Activated CD4-positive, alpha-beta T cell treated with anti-CD3 and anti-CD28 coated beads, Interleukin-2, amount 10 ng/mL, durations not matched to agents 24 days and 14 days (primary cell): ENCODE measurements at regions of chr19 and their contacts with region 1.

Region 1: DNA sequence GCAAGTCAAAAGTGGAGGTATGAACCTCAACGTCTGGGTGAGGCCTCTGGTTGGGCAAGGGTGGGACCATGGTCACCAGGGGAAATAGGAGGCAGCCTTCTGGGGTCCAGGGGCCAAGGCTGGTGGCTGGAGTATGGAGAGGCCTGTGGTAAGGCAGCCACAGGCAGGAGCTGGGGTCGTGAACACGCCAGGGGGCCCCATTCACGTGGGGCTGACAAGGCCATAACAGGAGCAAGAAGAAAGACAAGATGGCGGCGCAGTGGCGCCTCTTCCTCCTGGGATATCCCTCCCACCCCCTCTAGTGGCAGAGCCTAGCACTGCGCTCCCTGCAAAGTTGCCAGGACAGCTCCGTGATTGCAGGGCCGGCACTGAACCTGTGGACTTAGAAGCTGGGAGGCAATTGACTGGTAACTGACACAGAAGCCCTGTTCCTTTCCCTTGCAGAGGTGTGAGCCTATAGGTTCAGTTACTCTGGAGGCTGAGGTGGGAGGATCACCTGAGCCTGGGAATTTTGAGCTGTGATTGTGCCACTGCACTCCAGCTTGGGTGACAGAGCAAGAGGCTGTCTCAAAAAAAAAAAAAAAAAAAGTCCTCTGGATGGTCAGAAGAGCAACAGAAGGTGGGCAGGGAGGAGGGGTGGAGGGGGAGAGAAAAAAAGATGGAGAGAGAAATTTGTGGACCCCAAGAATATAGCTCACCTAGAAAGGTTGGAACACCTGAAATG is 19.7 kb upstream of the EDDM13 start:
- DNase-seq: peak; percentile 91
- H3K4me3 Mint-ChIP-seq: no peak overlapping the region
- H3K27ac Mint-ChIP-seq: no peak overlapping the region
- H3K4me1 Mint-ChIP-seq: no peaks in the 10 kb centered on the region
- H3K27me3 Mint-ChIP-seq: no peaks in the 10 kb centered on the region

Region 2: GRCh38 chr19:56066152-56067023 is 186.5 kb before region 1 on chr19:
- intact Hi-C with region 1: loop called (anchors 5 kb)
- DNase-seq: peak; percentile 90
- H3K4me3 Mint-ChIP-seq: peak overlapping the region; percentile 75
- H3K27ac Mint-ChIP-seq: no peak overlapping the region
- H3K4me1 Mint-ChIP-seq: peaks cover 10% of the 10 kb centered on the region
- H3K27me3 Mint-ChIP-seq: peaks cover 6% of the 10 kb centered on the region

Region 3: DNA sequence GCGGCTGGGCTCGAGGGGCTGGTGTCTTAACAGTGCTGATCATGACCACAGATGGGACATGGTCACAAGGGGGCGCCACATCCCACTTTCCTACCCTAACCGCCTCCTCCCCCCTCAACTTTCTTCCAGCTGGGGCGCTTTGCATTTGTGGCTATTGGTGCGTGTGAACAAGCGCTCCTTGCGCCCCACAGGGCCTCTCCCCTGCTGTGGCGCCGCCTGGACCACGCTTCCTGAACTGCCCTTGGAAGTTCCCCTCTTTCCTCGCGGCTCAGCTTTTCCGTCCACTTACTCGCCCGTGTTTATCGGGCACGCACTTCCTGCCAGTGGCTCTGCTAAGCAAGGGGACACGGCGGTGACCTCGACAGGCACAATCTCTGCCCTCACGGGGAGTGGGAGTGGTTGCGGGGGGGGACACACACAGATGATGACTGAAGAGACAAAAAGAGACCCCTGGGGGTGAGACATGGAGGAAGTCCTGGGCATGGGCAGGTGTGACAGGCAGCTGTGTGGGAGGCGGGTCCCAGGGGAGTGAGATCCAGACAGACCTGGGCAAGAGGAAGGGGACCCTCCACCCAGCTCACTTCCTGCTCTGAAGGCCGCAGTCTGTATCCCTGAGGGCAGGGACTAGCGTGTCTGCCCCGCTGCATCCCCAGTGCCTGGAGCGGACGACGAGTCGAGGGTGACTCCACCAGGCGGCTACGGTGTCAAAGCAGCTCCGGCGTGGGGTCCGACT is 172.0 kb before region 1 on chr19:
- intact Hi-C with region 1: loop called (anchors 5 kb)
- DNase-seq: peak; percentile 88
- H3K4me3 Mint-ChIP-seq: peak overlapping the region; percentile 79
- H3K27ac Mint-ChIP-seq: peak overlapping the region; percentile 58
- H3K4me1 Mint-ChIP-seq: peaks cover 10% of the 10 kb centered on the region
- H3K27me3 Mint-ChIP-seq: peaks cover 4% of the 10 kb centered on the region

Region 4: DNA sequence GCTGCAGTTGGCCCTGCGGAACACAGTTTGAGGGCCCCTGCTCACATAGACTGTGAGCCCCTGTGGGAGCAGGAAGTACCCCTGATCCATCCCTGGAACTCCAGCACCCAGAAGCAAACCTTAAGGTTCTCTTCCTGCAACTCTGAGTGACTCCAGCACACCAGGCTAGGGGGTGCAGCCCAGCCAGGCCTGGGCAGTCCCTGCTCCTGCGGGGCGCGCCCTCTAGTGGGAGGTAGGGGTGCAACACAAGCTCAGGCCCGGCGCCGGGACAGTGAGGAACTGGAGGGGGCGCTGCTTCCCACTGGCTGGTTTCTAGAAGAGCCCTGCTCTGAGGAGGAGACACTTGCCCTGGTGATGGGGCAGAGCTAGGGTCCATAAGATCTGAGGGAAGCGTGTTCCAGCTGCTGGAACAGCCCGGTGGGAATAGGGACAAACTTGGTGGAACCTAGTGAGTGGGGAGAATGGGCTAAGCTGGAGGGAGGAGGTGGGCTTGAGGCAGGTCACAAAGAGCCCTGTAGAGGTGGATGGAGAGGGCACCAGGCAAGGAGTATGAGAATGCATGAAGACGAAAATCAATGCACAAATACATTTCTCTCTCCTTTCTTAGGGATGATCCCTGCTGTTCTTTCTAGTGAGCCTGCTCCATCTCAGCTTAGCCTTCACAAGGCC is 56.8 kb after region 1 on chr19:
- intact Hi-C with region 1: no loop called
- DNase-seq: peak; percentile 88
- H3K4me3 Mint-ChIP-seq: no peak overlapping the region
- H3K27ac Mint-ChIP-seq: peak overlapping the region; percentile 21
- H3K4me1 Mint-ChIP-seq: peaks cover 24% of the 10 kb centered on the region
- H3K27me3 Mint-ChIP-seq: no peaks in the 10 kb centered on the region

Region 5: GRCh38 chr19:56333505-56333904 is 80.6 kb after region 1 on chr19:
- intact Hi-C with region 1: loop called (anchors 1 kb)
- DNase-seq: peak; percentile 86
- H3K4me3 Mint-ChIP-seq: no peak overlapping the region
- H3K27ac Mint-ChIP-seq: no peak overlapping the region
- H3K4me1 Mint-ChIP-seq: no peaks in the 10 kb centered on the region
- H3K27me3 Mint-ChIP-seq: no peaks in the 10 kb centered on the region

Region 6: DNA sequence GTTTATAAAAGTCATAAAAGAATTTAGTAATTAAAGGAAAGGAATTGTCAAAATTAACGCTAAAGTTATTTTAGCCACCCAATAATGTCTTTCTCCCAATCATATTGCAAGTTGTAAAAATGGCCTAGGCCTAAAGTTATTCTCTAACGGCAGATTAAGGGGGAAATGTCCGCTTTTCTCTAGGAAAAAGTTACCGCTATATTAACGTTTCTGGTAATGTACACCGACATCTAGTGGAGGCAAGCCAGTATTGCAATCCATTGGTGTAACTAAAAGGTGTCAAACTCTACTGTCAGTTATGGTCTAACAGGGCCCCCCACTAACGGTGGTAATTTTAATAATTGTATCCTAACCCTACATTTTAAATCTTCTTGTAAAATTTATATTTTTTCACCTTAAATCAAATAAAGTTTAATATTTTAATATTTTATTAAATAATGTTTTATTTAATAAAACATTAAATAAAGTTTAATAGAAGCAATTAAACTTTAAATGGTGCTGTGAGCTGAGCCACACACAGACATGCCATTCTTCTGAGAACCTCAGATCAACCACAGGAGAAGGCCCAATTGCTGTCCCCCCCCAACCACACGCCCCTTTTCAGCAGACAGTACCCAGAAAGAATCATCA is 97.7 kb after region 1 on chr19:
- intact Hi-C with region 1: loop called (anchors 1 kb)
- DNase-seq: peak; percentile 84
- H3K4me3 Mint-ChIP-seq: no peak overlapping the region
- H3K27ac Mint-ChIP-seq: no peak overlapping the region
- H3K4me1 Mint-ChIP-seq: no peaks in the 10 kb centered on the region
- H3K27me3 Mint-ChIP-seq: no peaks in the 10 kb centered on the region

Region 7: GRCh38 chr19:56377104-56377924 is 124.5 kb after region 1 on chr19:
- intact Hi-C with region 1: no loop called
- DNase-seq: no peak
- H3K4me3 Mint-ChIP-seq: no peak overlapping the region
- H3K27ac Mint-ChIP-seq: no peak overlapping the region
- H3K4me1 Mint-ChIP-seq: no peaks in the 10 kb centered on the region
- H3K27me3 Mint-ChIP-seq: no peaks in the 10 kb centered on the region

Region 8: GRCh38 chr19:56491399-56491798 is 238.5 kb after region 1 on chr19:
- intact Hi-C with region 1: no loop called
- DNase-seq: no peak
- H3K4me3 Mint-ChIP-seq: no peak overlapping the region
- H3K27ac Mint-ChIP-seq: no peak overlapping the region
- H3K4me1 Mint-ChIP-seq: no peaks in the 10 kb centered on the region
- H3K27me3 Mint-ChIP-seq: no peaks in the 10 kb centered on the region

Region 9: GRCh38 chr19:56594783-56595547 is 342.1 kb after region 1 on chr19 and contains the start of gene ZNF71:
- intact Hi-C with region 1: no loop called
- DNase-seq: peak; percentile 96
- H3K4me3 Mint-ChIP-seq: peak within 1 kb of the TSS; percentile 90
- H3K27ac Mint-ChIP-seq: peak within 1 kb of the TSS; percentile 60
- H3K4me1 Mint-ChIP-seq: peaks cover 12% of the 10 kb centered on the region
- H3K27me3 Mint-ChIP-seq: no peaks in the 10 kb centered on the region
- total RNA-seq, gene ZNF71: 4.2 and 5.2 TPM in 2 replicates